Activated CD4-positive, alpha-beta memory T cell treated with anti-CD3 and anti-CD28 coated beads for 36 hours (primary cell): ENCODE measurements at regions of chr17 and their contacts with region 1.

Region 1: DNA sequence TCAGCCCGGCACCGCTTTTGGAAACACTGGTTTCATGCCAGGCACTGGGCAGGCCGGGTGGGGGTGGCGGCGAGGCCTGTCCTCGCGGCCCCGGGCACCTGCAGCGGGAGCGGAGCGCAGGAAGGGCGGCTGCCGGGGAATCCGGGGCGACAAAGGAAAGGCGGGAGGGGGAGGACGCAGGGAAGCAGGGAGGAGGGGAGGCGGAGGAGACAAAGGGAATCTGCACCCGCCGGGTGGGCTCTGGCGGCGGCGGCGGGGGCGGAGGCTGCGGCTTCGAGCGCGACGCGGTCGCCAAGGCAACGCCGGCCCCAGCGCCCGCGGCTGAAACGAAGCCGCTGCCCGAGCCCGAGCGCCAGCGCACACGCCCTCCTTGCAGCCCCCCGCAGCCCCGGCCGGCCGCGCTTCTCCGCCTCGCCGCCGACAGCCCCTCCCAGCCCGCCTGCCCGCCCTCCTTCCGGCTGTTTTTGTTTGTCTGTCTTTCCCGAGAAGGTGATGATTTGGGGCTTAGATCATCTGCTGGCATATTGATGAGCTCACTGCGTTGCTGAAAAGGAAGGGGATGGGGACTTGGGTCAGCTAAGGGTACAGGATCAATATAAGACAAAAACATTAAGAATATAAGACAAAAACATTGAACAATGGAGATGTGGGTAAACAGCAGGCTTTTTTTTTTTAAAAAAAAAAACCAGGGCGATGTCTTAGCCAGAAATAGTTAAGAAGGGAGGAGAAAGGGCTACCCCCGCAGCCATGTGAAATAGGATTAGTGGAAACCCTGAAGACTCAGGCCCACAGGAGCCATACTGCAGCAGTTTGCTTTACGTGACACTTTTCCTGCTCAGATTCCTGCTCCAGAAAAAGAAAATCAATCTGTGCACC is 32.7 kb downstream of the CDK5R1 start:
- DNase-seq: peak; percentile 87
- H3K4me3 Mint-ChIP-seq: peak overlapping the region; percentile 79
- H3K27ac Mint-ChIP-seq: peak overlapping the region; percentile 90
- H3K4me1 Mint-ChIP-seq: peaks cover 78% of the 10 kb centered on the region
- H3K27me3 Mint-ChIP-seq: no peaks in the 10 kb centered on the region

Region 2: DNA sequence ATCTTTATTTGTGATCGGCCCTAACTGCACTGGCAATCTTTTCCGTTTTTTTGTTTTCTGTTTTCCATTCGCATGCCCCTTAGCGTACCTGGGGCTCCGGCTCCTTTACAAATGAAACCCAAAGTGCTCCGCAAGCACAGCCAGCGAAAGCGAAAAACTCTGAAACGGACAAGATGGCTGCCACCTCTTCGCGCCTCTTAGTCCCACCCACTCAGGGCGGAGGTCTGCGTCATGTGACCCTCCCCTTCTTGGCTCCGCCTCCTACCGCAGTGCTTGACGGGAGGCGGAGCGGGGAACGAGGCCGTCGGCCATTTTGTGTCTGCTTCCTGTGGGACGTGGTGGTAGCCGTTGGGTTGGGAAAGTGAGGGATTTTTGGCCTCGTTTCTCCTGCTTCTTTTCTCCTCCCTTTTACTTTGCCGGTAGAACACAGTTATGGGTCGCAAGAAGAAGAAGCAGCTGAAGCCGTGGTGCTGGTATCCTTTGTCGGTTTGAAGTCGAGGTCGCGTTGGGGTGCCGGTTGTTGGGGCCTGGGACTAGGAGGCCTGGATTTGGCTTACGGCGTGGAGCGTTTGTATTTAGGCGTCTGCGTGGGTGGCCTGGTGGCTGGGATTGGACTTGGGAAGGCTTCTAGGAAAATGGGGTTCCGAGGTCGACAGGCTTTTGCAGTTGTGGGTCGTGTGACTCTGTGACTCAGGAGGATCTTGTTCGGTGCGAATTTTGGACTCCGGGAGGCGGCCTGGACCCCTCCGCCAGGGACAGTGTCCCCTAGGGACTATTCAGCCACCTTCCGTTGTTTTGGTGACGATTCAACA is 169.4 kb before region 1 on chr17 and contains the start of gene ZNF207:
- CTCF ChIA-PET with region 1: no interaction called
- POLR2A ChIA-PET with region 1: no interaction called
- intact Hi-C with region 1: loop called (anchors 5 kb)
- DNase-seq: peak; percentile 97
- H3K4me3 Mint-ChIP-seq: peak within 1 kb of the TSS; percentile 99
- H3K27ac Mint-ChIP-seq: peak within 1 kb of the TSS; percentile 100
- H3K4me1 Mint-ChIP-seq: peaks cover 25% of the 10 kb centered on the region
- H3K27me3 Mint-ChIP-seq: no peaks in the 10 kb centered on the region
- total RNA-seq, gene ZNF207: 192 to 209 TPM

Region 3: DNA sequence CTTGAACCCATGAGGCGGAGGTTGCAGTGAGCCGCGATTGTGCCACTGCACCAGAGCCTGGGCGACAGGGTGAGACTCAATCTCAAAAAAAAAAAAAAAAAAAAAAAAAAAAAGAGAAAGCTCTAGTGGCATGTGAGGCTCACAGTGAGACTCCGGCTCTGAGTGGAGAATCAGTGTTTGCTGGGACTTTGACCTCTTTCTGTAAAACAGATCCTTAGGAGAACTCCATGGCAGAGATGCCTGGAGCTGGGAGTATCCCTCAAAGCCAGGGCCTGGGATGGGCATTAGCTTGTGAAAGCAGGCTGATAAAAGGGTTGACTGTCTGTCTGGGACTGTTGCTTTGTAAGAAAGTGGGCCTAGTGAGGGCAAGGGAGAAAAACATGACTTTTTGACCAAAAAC is 123.1 kb before region 1 on chr17:
- CTCF ChIA-PET with region 1: no interaction called
- POLR2A ChIA-PET with region 1: no interaction called
- intact Hi-C with region 1: no loop called
- DNase-seq: no peak
- H3K4me3 Mint-ChIP-seq: no peak overlapping the region
- H3K27ac Mint-ChIP-seq: no peak overlapping the region
- H3K4me1 Mint-ChIP-seq: no peaks in the 10 kb centered on the region
- H3K27me3 Mint-ChIP-seq: no peaks in the 10 kb centered on the region

Region 4: DNA sequence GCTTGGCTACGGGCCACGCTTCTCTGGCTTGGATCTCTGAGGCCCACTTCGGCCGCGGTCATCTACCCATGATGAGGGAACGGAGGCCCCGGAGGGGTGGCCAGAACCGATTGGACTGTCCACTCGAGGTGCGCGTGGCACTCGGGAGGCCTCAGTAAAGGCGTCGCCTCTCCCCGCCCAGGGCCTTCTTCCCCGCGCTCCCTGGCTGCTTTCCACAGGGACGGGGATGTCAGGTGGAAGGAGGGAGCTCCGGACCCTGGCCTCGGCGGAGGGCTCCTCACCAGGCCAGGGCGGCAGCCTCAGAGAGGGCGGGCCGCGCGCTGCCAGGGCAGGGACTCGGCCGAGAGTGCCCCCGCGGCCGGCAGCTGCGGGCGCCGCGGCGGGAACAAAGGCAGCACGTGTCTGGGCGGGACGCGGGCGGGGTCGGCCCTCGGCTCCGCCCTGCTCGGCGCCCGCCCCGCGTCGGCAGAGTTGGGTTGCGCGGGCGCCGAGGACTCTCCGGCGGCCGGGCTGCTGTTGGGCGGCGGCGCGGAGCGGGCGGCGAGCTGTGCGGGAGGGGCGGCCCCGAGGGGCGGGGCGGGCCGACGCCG is 33.3 kb before region 1 on chr17:
- CTCF ChIA-PET with region 1: interaction called, 13 read pairs
- POLR2A ChIA-PET with region 1: interaction called, 38 read pairs
- intact Hi-C with region 1: loop called (anchors 1 kb)
- DNase-seq: peak; percentile 73
- H3K4me3 Mint-ChIP-seq: peak overlapping the region; percentile 54
- H3K27ac Mint-ChIP-seq: peak overlapping the region; percentile 18
- H3K4me1 Mint-ChIP-seq: peaks cover 46% of the 10 kb centered on the region
- H3K27me3 Mint-ChIP-seq: no peaks in the 10 kb centered on the region

Region 5: DNA sequence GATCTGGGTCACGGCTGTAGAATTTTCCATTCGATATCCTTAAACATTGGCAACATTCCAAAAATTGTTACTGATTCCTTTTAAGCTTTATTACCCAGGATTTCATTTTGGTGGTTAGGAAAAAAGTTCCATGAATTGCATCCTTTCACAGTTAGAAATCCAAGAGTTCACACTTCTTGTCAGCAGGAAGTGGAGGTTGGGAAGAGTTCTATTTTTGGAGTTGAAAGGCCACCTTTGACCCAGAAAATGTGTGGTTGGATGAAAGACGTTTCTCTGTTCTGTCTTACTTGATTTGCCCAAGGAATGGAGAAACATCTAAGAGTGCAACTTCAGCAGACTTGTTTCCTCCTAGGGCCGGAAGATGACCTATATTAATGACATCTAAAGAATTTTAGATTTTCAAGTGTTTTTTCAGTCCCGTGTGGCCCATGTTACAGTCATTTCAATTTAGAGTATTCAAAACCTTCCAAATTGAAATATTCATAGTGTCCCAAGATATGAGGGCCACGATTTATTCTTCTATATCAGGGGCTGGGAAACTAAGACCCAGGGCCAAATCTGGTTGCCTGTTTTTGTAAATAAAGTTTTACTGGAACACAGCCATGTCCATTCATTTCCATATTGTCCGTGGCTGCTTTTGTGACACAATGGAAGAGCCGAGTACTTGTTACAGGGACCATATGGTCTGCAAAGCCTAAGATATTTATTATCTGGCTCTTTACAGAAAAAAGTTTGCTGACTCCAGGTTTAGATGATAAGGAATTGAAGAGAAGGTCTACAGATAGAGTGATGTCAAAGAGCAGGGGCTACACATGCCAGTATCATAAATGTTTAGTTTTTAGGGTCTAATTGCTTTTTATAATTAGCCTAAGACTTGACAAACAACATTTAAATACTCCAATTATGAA is 17.5 kb after region 1 on chr17:
- CTCF ChIA-PET with region 1: no interaction called
- POLR2A ChIA-PET with region 1: interaction called, 6 read pairs
- intact Hi-C with region 1: loop called (anchors 1 kb)
- DNase-seq: no peak
- H3K4me3 Mint-ChIP-seq: no peak overlapping the region
- H3K27ac Mint-ChIP-seq: no peak overlapping the region
- H3K4me1 Mint-ChIP-seq: peaks cover 11% of the 10 kb centered on the region
- H3K27me3 Mint-ChIP-seq: no peaks in the 10 kb centered on the region

Region 6: DNA sequence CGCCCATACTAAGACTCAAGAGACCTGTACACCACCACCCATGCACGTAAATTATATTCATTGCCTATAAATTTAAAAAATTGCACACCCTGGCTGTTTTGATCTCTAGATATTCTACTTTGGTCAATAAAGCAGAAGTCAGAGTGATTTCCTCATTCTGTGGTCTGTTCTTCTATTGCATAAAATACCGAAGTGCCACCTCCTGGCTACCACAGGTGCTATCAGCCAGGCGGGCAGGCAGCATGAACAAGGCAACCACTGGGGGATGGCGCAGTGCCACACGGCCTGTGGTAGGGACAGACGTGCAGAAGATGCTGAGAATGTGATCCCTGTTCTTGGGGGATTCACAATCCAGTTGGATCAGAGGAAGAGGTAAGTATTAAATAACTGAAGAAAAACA is 89.6 kb after region 1 on chr17:
- CTCF ChIA-PET with region 1: no interaction called
- POLR2A ChIA-PET with region 1: no interaction called
- intact Hi-C with region 1: loop called (anchors 10 kb)
- DNase-seq: peak; percentile 83
- H3K4me3 Mint-ChIP-seq: no peak overlapping the region
- H3K27ac Mint-ChIP-seq: no peak overlapping the region
- H3K4me1 Mint-ChIP-seq: peaks cover 7% of the 10 kb centered on the region
- H3K27me3 Mint-ChIP-seq: no peaks in the 10 kb centered on the region

Region 7: DNA sequence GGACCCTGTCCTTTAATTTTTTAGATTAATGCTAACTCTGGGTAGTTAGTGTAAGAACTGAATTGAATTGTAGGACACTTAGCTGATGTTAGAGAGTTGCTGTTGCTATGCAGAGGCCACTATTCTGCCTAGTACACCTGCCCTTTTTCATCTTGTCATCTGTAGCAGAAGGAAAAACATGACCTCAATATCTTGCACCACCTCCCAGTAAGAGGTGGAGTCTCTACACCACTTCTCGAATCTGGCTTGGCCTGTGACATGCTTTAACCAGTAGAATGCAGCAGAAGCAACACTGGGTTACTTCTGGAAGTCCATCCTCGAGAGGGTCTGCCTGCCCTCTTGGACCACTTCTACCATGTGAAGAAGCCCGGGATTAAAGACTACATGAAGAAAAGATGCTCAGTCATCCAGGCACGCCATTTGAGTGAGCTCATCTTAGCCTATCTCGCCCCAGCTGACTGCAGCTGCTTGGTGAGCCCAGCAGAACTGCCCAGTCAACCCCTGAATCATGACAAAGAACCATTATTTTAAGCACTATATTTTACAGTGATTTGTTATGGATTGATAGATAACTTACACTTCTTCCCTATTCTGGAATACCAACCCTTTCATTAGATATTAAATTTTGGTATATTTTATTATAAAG is 204.0 kb after region 1 on chr17:
- CTCF ChIA-PET with region 1: no interaction called
- POLR2A ChIA-PET with region 1: no interaction called
- intact Hi-C with region 1: no loop called
- DNase-seq: no peak
- H3K4me3 Mint-ChIP-seq: no peak overlapping the region
- H3K27ac Mint-ChIP-seq: no peak overlapping the region
- H3K4me1 Mint-ChIP-seq: no peaks in the 10 kb centered on the region
- H3K27me3 Mint-ChIP-seq: no peaks in the 10 kb centered on the region